GM12878 (cell line): ENCODE measurements at regions of chr15 and their contacts with region 1.

Region 1: GRCh38 chr15:75367913-75368688 is at the start of gene MAN2C1:
- DNase-seq: peak; percentile 95
- ATAC-seq: peak; percentile 95
- H3K4me3 ChIP-seq: peak within 1 kb of the TSS; percentile 75
- H3K27ac ChIP-seq: peak within 1 kb of the TSS; percentile 91
- H3K4me1 ChIP-seq: peaks cover 6% of the 10 kb centered on the region
- H3K27me3 ChIP-seq: no peaks in the 10 kb centered on the region
- CTCF ChIP-seq: peak; percentile 81 to 95 (median 87)
- EP300 ChIP-seq: no peak
- POLR2A ChIP-seq: peak; percentile 97
- RAD21 ChIP-seq: peak; percentile 73
- polyA plus RNA-seq, gene MAN2C1: 1.4 to 4.6 TPM

Region 2: DNA sequence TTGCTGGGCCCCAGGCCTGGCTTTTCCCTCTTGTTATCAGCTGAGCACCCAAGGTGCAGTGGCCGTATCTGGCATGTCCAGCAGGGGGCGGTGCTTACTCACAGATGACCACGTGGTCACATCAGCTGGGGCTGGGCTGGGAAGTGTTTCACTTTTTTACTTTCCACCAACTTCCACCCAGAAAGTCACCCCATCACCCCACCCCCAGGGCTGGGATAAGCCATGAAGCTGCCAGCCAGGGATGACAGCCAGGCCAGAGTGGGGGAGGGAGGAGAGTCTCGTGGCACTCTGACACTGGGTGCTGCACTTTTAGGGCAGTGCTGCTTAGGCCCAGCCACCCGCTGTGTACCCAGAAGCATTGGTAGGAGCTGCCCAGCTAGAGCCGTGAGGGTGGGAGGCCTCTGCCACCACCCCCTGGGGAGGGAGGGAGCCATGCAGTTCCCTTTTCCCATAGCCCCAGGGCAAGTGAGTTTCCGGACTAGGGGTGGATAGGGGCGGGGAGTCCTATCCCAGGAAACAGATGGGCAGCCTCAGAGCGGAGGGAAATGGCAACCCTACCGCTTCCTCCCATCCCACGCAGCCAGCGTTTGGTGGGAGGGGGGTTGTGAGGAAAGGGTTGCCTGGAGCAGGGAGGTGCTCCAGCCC is 338.6 kb before region 1 on chr15:
- CTCF ChIA-PET with region 1: interaction called, 5 read pairs
- POLR2A ChIA-PET with region 1: no interaction called
- RAD21 ChIA-PET with region 1: no interaction called
- SMC1A ChIA-PET with region 1: interaction called, 11 read pairs
- in situ Hi-C with region 1: no loop called
- intact Hi-C with region 1: no loop called
- DNase-seq: no peak
- ATAC-seq: peak; percentile 90
- H3K4me3 ChIP-seq: 0 out of 2 replicates have a peak overlapping the region, but pooled peaks have one; percentile 26
- H3K27ac ChIP-seq: peak overlapping the region; percentile 74
- H3K4me1 ChIP-seq: peaks cover 49% of the 10 kb centered on the region
- H3K27me3 ChIP-seq: no peaks in the 10 kb centered on the region
- CTCF ChIP-seq: peak; percentile 89 to 97 (median 92); a peak in 5 of 6 replicates
- EP300 ChIP-seq: no peak
- POLR2A ChIP-seq: no peak
- RAD21 ChIP-seq: peak; percentile 98

Region 3: GRCh38 chr15:75313116-75313845 is 54.8 kb before region 1 on chr15:
- CTCF ChIA-PET with region 1: no interaction called
- POLR2A ChIA-PET with region 1: no interaction called
- RAD21 ChIA-PET with region 1: no interaction called
- SMC1A ChIA-PET with region 1: no interaction called
- in situ Hi-C with region 1: no loop called
- intact Hi-C with region 1: no loop called
- DNase-seq: no peak
- ATAC-seq: no peak
- H3K4me3 ChIP-seq: no peak overlapping the region
- H3K27ac ChIP-seq: no peak overlapping the region
- H3K4me1 ChIP-seq: no peaks in the 10 kb centered on the region
- H3K27me3 ChIP-seq: no peaks in the 10 kb centered on the region; a peak in 1 of 4 replicates
- CTCF ChIP-seq: no peak
- EP300 ChIP-seq: no peak
- POLR2A ChIP-seq: no peak
- RAD21 ChIP-seq: no peak

Region 4: GRCh38 chr15:75380773-75381172 is 12.7 kb after region 1 on chr15:
- CTCF ChIA-PET with region 1: interaction called, 28 read pairs
- POLR2A ChIA-PET with region 1: interaction called, 13 read pairs
- RAD21 ChIA-PET with region 1: no interaction called
- SMC1A ChIA-PET with region 1: interaction called, 11 read pairs
- in situ Hi-C with region 1: no loop called
- intact Hi-C with region 1: no loop called
- DNase-seq: no peak
- ATAC-seq: no peak
- H3K4me3 ChIP-seq: no peak overlapping the region
- H3K27ac ChIP-seq: no peak overlapping the region
- H3K4me1 ChIP-seq: no peaks in the 10 kb centered on the region
- H3K27me3 ChIP-seq: no peaks in the 10 kb centered on the region
- CTCF ChIP-seq: no peak
- EP300 ChIP-seq: no peak
- POLR2A ChIP-seq: no peak
- RAD21 ChIP-seq: no peak

Region 5: DNA sequence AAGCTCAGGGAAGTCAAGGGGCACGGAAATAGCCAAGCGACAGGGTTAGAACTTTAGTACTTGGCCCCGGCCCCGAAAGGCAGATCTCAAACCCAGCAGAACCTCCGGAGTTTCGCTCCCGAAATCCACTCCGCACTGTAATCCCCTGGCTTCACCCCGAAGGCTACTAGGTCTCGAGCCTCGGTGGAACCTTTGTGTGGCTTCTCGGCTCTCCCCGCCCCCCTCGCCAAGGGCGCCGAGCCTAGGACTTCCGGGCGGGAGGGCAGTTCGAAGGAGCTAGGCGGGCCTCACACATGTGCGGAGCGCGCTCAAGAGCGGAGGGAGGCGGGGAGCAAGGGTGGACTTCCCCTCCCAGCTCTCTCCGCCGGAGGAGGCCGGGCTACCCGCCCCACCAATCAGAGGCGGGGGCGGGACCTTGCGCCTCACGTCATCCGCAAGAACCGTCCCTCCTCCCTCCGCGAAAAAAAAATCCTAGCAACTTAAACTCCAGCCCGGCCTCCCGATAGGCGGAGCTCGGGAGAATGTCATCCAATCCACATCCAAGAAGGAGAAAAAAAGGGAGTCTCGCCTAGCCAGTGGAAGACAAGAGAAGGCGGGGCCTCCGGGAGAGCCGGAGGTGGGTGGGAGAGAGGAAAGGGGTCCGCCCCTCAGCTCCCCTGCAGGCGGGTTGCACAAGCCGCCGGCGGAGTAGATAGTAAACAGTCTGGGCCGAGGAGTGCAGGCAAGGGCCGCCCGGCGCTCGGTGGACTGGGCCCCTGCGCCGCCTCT is 85.8 kb after region 1 on chr15:
- CTCF ChIA-PET with region 1: interaction called, 63 read pairs
- POLR2A ChIA-PET with region 1: interaction called, 43 read pairs
- RAD21 ChIA-PET with region 1: interaction called, 113 read pairs
- SMC1A ChIA-PET with region 1: interaction called, 19 read pairs
- in situ Hi-C with region 1: no loop called
- intact Hi-C with region 1: loop called (anchors 2 kb)
- DNase-seq: peak; percentile 98
- ATAC-seq: peak; percentile 54
- H3K4me3 ChIP-seq: peak overlapping the region; percentile 76
- H3K27ac ChIP-seq: peak overlapping the region; percentile 96
- H3K4me1 ChIP-seq: peaks cover 11% of the 10 kb centered on the region
- H3K27me3 ChIP-seq: no peaks in the 10 kb centered on the region
- CTCF ChIP-seq: no peak
- EP300 ChIP-seq: no peak
- POLR2A ChIP-seq: peak; percentile 89
- RAD21 ChIP-seq: no peak

Region 6: DNA sequence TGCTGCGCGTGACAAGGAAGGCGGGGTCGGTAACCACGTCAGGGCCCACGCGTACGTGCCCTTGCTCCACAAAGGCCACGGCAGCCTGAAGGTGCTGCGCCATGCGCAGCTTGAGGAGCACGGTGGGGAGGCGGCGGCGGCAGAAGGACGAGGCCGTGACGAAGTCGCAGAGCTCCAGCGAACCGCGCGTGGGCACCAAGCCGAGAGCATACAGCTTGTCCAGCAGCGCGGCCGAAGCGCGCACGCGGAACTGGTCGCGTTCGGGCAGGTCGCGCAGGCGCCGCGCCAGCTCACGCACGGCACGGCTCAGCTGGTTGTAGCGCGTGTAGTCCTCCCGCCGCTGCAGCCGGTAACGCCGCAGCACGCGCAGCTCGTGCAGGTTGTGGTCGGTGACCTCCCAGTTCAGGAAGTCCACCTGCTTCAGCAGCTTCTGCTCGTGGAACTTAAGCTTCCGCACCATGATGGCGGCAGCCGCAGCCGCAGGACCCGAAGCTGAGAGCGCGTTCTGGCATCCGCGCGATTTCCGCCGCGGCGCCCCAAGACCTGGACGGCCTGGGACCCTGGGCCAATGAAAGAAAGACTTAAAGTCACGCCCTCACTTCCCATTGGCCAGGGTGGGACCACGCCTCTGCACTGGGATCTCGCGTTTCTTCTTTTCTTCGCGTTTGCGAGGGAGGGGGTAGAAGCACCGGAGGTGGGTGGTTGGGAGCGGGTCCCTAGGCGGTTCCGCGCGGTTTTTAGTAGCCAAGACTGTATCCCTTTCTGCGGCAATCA is 271.8 kb after region 1 on chr15 and contains the start of gene IMP3:
- CTCF ChIA-PET with region 1: interaction called, 86 read pairs
- POLR2A ChIA-PET with region 1: interaction called, 34 read pairs
- RAD21 ChIA-PET with region 1: interaction called, 48 read pairs
- SMC1A ChIA-PET with region 1: interaction called, 24 read pairs
- in situ Hi-C with region 1: no loop called
- intact Hi-C with region 1: loop called (anchors 1 kb)
- DNase-seq: peak; percentile 95
- ATAC-seq: peak; percentile 95
- H3K4me3 ChIP-seq: peak within 1 kb of the TSS; percentile 76
- H3K27ac ChIP-seq: peak within 1 kb of the TSS; percentile 75
- H3K4me1 ChIP-seq: no peaks in the 10 kb centered on the region
- H3K27me3 ChIP-seq: no peaks in the 10 kb centered on the region
- CTCF ChIP-seq: no peak
- EP300 ChIP-seq: peak in 1 of 2 experiments; percentile 19; a peak in 1 of 4 replicates
- POLR2A ChIP-seq: peak; percentile 99
- RAD21 ChIP-seq: no peak
- polyA plus RNA-seq, gene IMP3: 13.3 to 34.9 TPM

Region 7: DNA sequence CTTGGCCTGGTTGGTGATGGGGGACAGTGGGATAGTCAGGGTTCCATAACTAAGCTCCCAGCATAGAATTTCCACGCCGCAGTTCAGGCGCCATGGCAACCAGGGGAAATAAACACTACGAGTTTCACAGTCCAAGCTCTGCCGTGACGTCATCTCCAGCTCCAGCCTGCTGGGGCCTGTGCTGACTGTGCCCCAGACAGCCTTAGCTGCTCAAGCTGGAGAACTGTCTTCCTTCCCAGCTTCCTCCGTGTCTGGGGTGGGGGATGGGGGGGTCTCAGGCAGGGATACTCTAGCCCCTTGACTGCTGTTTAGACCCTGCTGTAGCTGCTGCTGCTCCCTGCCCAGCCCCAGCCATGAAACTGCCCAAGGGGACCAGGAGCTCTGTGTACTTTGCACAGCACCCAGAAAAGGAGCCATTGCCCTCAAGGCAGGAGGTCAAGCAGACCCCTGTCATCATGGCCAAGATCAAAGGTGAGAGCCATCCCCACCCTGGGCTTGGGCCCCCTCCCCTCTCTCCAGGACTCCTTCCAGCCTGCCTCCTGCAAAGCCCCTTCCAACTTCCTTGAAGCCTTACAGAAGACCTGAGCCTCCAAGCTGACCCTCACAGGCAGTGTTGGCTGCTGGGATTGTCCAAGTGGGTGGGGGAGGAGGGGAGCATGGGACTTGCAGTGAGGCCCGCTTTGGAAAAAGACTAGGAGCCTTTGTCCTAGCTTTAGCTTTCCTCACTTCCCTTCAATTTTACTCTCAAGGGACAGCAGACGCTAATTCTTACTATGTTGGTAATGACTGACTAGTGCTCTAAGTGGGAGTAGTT is 356.0 kb after region 1 on chr15:
- CTCF ChIA-PET with region 1: interaction called, 11 read pairs
- POLR2A ChIA-PET with region 1: no interaction called
- RAD21 ChIA-PET with region 1: interaction called, 4 read pairs
- SMC1A ChIA-PET with region 1: no interaction called
- in situ Hi-C with region 1: no loop called
- intact Hi-C with region 1: no loop called
- DNase-seq: no peak
- ATAC-seq: peak; percentile 86
- H3K4me3 ChIP-seq: no peak overlapping the region
- H3K27ac ChIP-seq: no peak overlapping the region
- H3K4me1 ChIP-seq: peaks cover 3% of the 10 kb centered on the region; the same call in 1 of the 2 replicates
- H3K27me3 ChIP-seq: no peaks in the 10 kb centered on the region
- CTCF ChIP-seq: no peak
- EP300 ChIP-seq: peak in 1 of 2 experiments; percentile 37; a peak in 1 of 4 replicates
- POLR2A ChIP-seq: no peak
- RAD21 ChIP-seq: no peak

Region 8: DNA sequence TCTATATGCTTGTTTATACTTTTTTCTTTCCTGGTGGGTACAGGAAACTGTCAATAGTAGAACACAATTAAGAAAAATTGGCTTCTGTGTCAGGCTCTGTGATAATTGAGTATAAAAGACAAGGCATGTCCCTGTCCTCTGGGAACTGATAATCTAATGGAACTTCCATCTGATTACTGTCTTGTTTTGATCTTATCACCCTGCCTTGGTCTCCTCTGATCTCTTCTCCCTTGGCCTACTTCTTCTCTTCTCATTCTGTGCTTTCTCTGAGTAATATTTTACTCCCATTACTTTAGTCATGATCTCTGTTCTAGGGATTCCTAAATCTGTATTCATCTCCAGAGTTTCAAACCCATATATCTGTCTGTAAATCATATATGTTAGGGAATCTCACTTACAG is 489.8 kb after region 1 on chr15:
- CTCF ChIA-PET with region 1: no interaction called
- POLR2A ChIA-PET with region 1: no interaction called
- RAD21 ChIA-PET with region 1: no interaction called
- SMC1A ChIA-PET with region 1: no interaction called
- in situ Hi-C with region 1: no loop called
- intact Hi-C with region 1: no loop called
- DNase-seq: no peak
- ATAC-seq: no peak
- H3K4me3 ChIP-seq: no peak overlapping the region
- H3K27ac ChIP-seq: no peak overlapping the region
- H3K4me1 ChIP-seq: no peaks in the 10 kb centered on the region
- H3K27me3 ChIP-seq: no peaks in the 10 kb centered on the region
- CTCF ChIP-seq: no peak
- EP300 ChIP-seq: no peak
- POLR2A ChIP-seq: no peak
- RAD21 ChIP-seq: no peak